GM10248 (cell line): ENCODE measurements at regions of chr11 and their contacts with region 1.

Region 1: DNA sequence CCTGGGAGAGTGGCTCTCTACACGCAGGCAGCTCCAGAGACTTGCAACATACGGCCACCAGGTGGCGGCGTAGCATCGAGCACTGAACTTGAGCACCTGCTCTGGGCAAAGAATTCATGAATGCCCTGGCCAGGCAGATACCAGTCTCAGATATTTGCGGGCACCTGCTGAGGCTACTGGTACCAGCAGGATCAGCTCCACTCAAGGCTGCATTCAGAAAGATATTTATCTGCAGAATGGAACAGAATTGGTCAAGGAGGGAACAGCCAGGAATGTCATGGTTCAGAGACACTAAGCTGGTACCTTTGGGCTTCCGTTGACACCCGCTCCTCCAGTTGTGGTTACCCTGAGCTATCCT is 10.8 kb upstream of the CCDC86 start:
- DNase-seq: peak; percentile 84
- CTCF ChIP-seq: peak; percentile 96

Region 2: DNA sequence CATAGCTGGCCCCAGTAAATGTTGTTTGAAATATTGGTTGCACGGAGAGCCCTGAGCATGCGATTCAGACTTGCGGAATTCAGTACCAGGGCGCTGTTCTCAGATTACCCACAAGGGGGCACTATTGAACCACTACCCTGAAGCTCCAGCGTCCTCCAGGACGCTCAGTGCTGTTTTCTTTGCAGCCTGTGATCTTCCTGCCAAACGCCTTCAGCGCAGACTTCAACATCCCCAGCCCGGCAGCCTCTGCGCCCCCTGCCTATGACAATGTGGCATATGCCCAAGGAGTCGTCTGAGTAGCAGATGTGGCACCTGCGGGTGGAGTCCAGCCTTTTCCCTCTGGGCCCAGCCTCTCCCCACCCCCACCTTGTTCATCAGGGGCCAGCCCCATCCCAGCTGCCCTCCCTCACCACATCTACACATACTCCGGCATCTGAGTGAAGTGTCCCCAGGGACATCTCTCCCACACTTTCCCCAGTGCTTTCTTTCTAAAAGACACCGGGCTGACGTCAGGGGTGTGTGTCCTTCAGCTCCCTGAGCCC is 55.6 kb before region 1 on chr11:
- CTCF ChIA-PET with region 1: interaction called, 23 read pairs
- POLR2A ChIA-PET with region 1: no interaction called
- DNase-seq: peak; percentile 87
- CTCF ChIP-seq: peak; percentile 74

Region 3: GRCh38 chr11:60841797-60842667 is 10.9 kb after region 1 on chr11 and contains the start of gene CCDC86:
- CTCF ChIA-PET with region 1: interaction called, 42 read pairs
- POLR2A ChIA-PET with region 1: no interaction called
- DNase-seq: peak; percentile 100
- CTCF ChIP-seq: no peak

Region 4: GRCh38 chr11:60887556-60887955 is 56.4 kb after region 1 on chr11:
- CTCF ChIA-PET with region 1: interaction called, 96 read pairs
- POLR2A ChIA-PET with region 1: no interaction called
- DNase-seq: no peak
- CTCF ChIP-seq: peak; percentile 59

Region 5: GRCh38 chr11:61129639-61130523 is 298.8 kb after region 1 on chr11:
- CTCF ChIA-PET with region 1: interaction called, 16 read pairs
- POLR2A ChIA-PET with region 1: no interaction called
- DNase-seq: peak; percentile 97
- CTCF ChIP-seq: peak; percentile 100

Region 6: DNA sequence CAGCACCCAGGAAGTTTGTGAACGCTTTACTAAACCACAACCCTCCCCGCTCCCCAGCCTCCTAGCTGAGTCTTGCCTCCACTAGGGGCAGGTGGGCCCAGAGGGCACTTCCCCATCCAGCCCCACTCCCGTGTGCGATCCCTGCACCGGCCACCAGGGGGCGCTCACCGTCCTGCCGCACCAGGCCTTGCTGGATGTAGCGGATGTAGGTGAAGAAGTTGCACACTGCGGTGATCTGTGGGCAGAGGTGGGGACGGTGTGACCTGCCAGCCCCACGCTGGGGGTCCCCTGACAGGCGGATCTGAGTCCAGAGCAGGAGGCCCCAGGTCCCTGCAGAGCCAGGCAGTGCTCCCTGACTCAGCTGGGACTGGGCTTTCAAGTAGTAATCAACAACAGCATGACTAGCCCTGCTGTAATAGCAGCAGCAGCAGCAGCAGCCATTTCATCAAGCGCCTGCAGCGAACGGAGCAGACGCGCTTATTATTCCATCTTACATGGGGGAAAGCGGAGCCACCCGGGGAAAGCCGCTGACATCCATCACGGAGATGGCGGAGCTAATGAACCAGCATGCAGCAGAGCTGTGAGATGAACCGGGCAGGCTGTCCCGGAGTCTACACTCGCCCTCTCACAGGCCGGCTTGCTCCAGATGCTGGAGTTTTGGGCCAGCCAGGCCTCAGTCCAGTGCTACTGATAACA is 1068.2 kb after region 1 on chr11:
- CTCF ChIA-PET with region 1: no interaction called
- POLR2A ChIA-PET with region 1: no interaction called
- DNase-seq: peak; percentile 95
- CTCF ChIP-seq: peak; percentile 100